ENCODE measurements at regions of chr15 and their contacts with region 1.

Region 1: GRCh38 chr15:35078221-35078915 is 6.7 kb downstream of the NANOGP8 start:
- DNase-seq: peak; percentile 44
- ATAC-seq: peak; percentile 86
- H3K4me3 ChIP-seq: no peak overlapping the region
- H3K27ac ChIP-seq: no peak overlapping the region
- H3K4me1 ChIP-seq: no peaks in the 10 kb centered on the region
- H3K27me3 ChIP-seq: no peaks in the 10 kb centered on the region
- CTCF ChIP-seq: peak; percentile 45 to 83 (median 67); a peak in 5 of 6 replicates
- POLR2A ChIP-seq: no peak
- RAD21 ChIP-seq: peak; percentile 87

Region 2: GRCh38 chr15:35038660-35039451 is 39.5 kb before region 1 on chr15:
- CTCF ChIA-PET with region 1: no interaction called
- POLR2A ChIA-PET with region 1: no interaction called
- RAD21 ChIA-PET with region 1: no interaction called
- intact Hi-C with region 1: no loop called
- DNase-seq: no peak
- ATAC-seq: no peak
- H3K4me3 ChIP-seq: no peak overlapping the region
- H3K27ac ChIP-seq: no peak overlapping the region
- H3K4me1 ChIP-seq: peaks cover 0 to 4% of the 10 kb centered on the region in 2 experiments; a peak in 1 of 4 replicates
- H3K27me3 ChIP-seq: no peaks in the 10 kb centered on the region
- CTCF ChIP-seq: no peak
- POLR2A ChIP-seq: no peak
- RAD21 ChIP-seq: no peak

Region 3: GRCh38 chr15:35437157-35437556 is 358.8 kb after region 1 on chr15:
- CTCF ChIA-PET with region 1: no interaction called
- POLR2A ChIA-PET with region 1: no interaction called
- RAD21 ChIA-PET with region 1: no interaction called
- intact Hi-C with region 1: loop called (anchors 2 kb)
- DNase-seq: peak; percentile 12
- ATAC-seq: peak; percentile 50
- H3K4me3 ChIP-seq: no peak overlapping the region
- H3K27ac ChIP-seq: no peak overlapping the region
- H3K4me1 ChIP-seq: no peaks in the 10 kb centered on the region
- H3K27me3 ChIP-seq: no peaks in the 10 kb centered on the region
- CTCF ChIP-seq: peak; percentile 11 to 24 (median 22); a peak in 1 of 6 replicates
- POLR2A ChIP-seq: no peak
- RAD21 ChIP-seq: peak; percentile 45; the same call in 1 of the 2 replicates

Region 4: DNA sequence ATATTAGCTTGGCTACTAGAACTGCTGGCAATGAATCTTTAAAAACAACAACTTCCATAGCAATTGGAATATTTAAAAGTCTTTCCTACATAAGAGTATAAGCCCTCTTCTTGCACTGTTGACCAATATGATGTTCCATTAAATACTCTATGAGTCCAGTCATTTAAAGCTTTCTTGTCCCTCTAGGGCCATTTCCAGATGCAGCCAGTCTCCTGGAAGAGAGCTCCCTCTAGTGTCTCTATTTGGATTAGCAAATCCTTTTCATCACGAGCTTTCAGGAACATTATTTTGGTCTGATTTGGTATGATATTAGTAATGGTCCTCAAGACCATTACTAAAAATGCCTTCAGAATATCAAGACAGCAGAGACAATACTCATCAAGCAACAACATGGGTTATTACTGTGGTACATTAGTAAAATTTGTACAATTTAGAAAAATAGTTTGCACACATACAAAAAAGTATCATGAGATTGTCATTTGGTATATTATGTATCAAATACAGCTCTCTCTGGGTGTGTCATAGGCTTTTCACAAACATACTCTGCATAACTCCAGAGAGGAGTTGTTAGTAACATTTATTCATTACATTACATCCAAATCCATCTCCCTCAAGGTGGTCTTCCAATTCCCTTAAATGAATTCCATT is 366.3 kb after region 1 on chr15:
- CTCF ChIA-PET with region 1: interaction called, 49 read pairs
- POLR2A ChIA-PET with region 1: no interaction called
- RAD21 ChIA-PET with region 1: interaction called, 4 to 5 read pairs
- intact Hi-C with region 1: loop called (anchors 1 kb)
- DNase-seq: peak; percentile 39
- ATAC-seq: peak; percentile 65
- H3K4me3 ChIP-seq: no peak overlapping the region
- H3K27ac ChIP-seq: no peak overlapping the region
- H3K4me1 ChIP-seq: no peaks in the 10 kb centered on the region
- H3K27me3 ChIP-seq: no peaks in the 10 kb centered on the region
- CTCF ChIP-seq: peak; percentile 55 to 87 (median 76); a peak in 5 of 6 replicates
- POLR2A ChIP-seq: no peak
- RAD21 ChIP-seq: peak; percentile 80